Heart left ventricle (tissue), 16 donors: ENCODE measurements at regions of chr20 and their contacts with region 1.

Region 1: DNA sequence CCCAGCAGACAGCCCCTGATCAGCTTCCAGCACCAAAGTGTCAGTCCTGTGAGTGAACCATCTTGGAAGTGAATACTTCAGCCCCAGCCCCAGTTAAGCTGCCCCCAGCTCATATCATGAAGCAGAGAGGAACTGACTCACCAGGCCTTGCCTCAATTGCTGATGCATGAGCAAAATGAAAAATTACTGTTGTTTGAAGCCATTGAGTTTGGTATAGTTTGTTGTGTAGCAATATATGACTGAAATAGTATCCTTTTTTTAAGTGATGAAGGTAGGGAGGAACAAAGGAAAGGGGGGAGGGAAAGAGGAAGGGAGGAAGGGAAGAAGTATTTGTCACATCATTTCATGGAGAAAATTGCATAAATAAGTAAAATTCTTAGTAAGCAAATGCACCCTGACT is 266.4 kb downstream of the MAFB start:
- DNase-seq: no peak
- ATAC-seq: peak in 2 of 4 donors; percentile 22 to 33
- H3K4me3 ChIP-seq: no peak overlapping the region
- H3K27ac ChIP-seq: peak overlapping the region in 1 of 12 donors; percentile 7
- H3K4me1 ChIP-seq: peaks cover 0 to 22% (median 0%) of the 10 kb centered on the region in 12 donors
- H3K27me3 ChIP-seq: peaks cover 0 to 5% (median 0%) of the 10 kb centered on the region in 9 donors
- CTCF ChIP-seq: no peak
- POLR2A ChIP-seq: no peak

Region 2: GRCh38 chr20:40354880-40355279 is 67.8 kb before region 1 on chr20:
- intact Hi-C with region 1: loop called in 1 of 10 experiments (anchors 2 kb)
- DNase-seq: no peak
- ATAC-seq: no peak
- H3K4me3 ChIP-seq: no peak overlapping the region
- H3K27ac ChIP-seq: no peak overlapping the region
- H3K4me1 ChIP-seq: peaks cover 0 to 17% (median 0%) of the 10 kb centered on the region in 12 donors
- H3K27me3 ChIP-seq: peaks cover 0 to 18% (median 0%) of the 10 kb centered on the region in 9 donors
- CTCF ChIP-seq: no peak
- POLR2A ChIP-seq: no peak

Region 3: DNA sequence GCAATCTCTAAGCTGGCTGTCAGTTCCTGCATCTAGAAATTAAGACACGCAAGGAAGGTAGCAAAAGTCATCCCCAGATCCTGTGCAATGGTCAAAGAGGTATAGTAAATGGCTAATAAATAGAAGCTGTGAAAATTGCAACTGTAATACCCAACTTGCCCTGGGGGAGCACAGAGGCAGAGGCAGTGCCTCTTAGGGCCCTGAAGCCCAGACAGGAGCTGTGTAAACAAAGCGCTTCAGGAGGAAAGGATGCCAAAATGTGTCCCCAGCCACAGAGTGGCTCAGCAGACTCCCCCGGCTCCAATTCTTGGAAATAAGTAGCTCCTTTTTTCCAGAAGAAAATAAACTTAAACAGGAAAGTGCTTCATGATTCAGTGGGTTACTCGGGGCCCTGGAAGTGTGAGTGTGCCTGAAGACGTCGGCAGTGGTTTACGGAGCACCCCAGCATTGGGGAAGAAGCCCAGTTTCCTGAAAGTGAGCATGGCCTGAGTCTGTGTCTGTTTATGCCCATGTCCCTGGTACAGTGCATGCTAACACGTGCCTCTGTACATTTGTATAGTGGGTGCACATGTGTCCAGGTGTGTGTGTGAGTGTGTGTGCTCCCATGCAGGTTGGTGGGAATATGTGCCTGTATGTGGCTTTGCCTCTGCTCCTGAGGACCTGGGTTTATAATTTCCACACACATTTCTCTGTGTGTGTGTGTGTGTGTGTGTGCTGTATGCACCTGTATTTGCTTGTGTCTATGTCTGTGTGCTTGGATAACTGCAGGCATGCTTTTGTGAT is 19.7 kb after region 1 on chr20:
- intact Hi-C with region 1: no loop called
- DNase-seq: no peak
- ATAC-seq: peak in 1 of 4 donors; percentile 45
- H3K4me3 ChIP-seq: no peak overlapping the region
- H3K27ac ChIP-seq: no peak overlapping the region
- H3K4me1 ChIP-seq: peaks cover 0 to 22% (median 0%) of the 10 kb centered on the region in 12 donors
- H3K27me3 ChIP-seq: peaks cover 0 to 8% (median 0%) of the 10 kb centered on the region in 9 donors
- CTCF ChIP-seq: no peak
- POLR2A ChIP-seq: no peak

Region 4: GRCh38 chr20:40477805-40478204 is 55.1 kb after region 1 on chr20:
- intact Hi-C with region 1: loop called in 1 of 10 experiments (anchors 5 kb)
- DNase-seq: no peak
- ATAC-seq: peak in 1 of 4 donors; percentile 46
- H3K4me3 ChIP-seq: no peak overlapping the region
- H3K27ac ChIP-seq: no peak overlapping the region
- H3K4me1 ChIP-seq: peaks cover 0 to 9% (median 0%) of the 10 kb centered on the region in 12 donors
- H3K27me3 ChIP-seq: peaks cover 0 to 18% (median 0%) of the 10 kb centered on the region in 9 donors
- CTCF ChIP-seq: no peak
- POLR2A ChIP-seq: no peak